ENCODE measurements at regions of chr2 and their contacts with region 1.

Region 1: DNA sequence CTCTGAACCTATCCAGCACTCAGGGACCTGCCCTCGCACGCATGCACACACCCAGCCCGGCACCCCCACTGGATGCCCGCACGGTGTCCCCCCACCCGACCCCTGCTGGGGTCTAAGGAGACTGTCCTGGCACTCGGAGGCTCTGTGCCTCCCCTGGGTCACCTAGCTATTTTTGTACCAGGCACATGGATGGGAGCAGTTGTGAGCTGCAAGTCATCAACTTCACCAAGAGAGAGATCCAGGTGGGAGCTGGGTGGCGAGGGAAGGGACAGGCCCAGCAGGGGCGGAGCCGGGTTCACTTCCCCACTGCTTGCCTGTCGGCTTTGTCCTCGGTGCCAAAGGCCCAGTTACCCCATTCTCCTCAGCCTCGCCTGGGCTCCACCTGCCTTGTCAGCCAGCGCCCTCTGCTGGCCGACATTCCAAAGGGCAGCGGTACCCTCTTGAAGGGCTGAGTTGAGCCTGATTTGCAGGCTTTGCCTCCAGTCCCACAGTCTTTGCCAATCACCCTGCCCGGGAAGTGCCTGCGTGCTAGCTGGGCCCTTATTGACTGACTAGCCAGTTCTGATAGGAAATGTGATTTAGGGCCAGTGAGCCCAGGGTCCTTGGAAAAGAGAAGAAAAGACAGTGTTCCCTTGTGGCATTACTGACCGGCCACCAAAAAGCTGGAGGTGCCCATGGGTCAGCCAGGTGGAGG is 5.8 kb downstream of the NT5DC4 start:
- DNase-seq: peak; percentile 92
- H3K4me3 Mint-ChIP-seq: no peak overlapping the region
- H3K27ac Mint-ChIP-seq: no peak overlapping the region
- H3K4me1 Mint-ChIP-seq: peaks cover 19% of the 10 kb centered on the region
- H3K27me3 Mint-ChIP-seq: peaks cover 51% of the 10 kb centered on the region

Region 2: DNA sequence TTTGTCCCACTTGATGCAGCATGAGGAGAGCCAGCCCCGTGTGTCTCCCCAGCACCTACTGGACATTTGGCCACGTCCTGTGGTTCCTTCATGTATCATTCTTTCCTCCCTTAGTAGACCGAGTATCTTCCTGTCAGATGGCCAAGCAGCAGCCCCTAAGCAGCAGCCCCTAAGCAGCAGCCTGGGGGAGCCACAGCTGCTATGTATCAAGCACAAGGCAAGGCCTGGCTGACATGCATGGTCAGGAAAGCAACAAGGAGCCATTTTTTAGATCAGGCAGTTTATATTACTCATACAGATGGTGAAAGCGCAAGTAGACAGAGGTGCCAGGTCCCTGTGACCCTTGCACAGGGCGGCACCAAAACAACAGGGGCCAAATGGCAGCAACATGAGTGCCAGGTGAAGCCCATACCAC is 120.1 kb before region 1 on chr2:
- CTCF ChIA-PET with region 1: interaction called, 213 read pairs
- DNase-seq: no peak
- H3K4me3 Mint-ChIP-seq: no peak overlapping the region
- H3K27ac Mint-ChIP-seq: no peak overlapping the region
- H3K4me1 Mint-ChIP-seq: no peaks in the 10 kb centered on the region
- H3K27me3 Mint-ChIP-seq: peaks cover 16% of the 10 kb centered on the region

Region 3: DNA sequence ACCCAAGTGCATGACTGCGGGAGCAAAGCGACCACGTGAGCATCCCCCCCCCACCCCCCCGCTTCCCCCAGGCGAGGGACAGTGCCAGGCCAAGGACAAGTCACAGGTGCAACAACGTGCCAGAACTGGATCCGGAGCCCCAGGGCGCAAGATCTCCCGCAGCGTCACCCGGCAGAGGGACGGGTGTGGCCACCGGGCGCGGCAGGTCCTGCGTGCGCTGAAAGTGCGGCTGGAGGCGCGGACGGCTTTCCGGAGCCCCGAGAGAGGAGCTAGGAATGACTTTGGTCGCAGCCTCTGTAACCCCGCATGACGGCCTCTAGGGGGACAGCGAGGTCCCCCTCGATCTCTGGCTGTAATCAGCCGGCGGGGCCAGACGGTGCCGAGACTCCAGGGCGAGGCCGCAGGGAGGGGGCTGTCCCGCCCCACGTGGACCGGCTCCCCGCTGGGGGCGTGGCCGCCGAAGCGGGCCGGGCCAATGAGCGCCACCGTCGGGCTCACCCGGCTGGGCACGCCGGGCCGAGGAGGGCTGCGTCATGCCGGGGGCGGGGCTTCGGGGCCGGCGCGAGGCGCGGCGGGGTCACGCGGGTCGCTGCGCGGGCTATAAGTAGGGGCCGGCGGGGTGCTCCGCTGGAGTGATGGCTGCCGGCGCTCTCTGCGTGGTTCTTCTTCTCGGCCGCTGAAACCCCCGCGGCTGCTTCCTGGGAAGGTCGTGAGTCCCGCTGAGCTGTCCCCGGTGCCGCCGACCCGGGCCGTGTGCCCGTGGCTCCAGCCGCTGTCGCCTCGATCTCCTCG is 81.1 kb before region 1 on chr2 and contains the start of gene SLC20A1:
- CTCF ChIA-PET with region 1: interaction called, 39 read pairs
- DNase-seq: peak; percentile 98
- H3K4me3 Mint-ChIP-seq: peak within 1 kb of the TSS; percentile 99
- H3K27ac Mint-ChIP-seq: peak within 1 kb of the TSS; percentile 93
- H3K4me1 Mint-ChIP-seq: peaks cover 69% of the 10 kb centered on the region
- H3K27me3 Mint-ChIP-seq: no peaks in the 10 kb centered on the region

Region 4: DNA sequence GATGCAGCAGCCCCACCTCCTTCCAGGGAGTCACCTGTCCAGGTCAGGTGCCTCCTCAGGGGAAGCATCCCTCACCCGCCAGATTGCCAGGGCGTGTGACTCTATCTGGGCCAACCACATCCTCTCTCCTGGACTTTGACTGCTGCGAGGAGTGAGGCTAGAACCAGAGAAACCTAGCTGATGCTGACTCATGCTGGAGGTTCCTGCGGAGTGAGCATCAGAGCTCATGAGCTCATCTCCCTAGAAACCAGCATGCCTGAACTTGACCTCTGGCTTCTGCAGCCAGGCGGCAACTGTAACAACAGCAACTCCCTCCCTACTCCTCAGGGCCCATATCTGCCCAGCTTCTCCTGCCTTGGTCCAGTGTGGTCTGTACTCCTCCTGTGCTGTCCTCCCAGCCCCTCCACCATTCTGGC is 34.1 kb before region 1 on chr2:
- CTCF ChIA-PET with region 1: interaction called, 94 read pairs
- DNase-seq: peak; percentile 77
- H3K4me3 Mint-ChIP-seq: no peak overlapping the region
- H3K27ac Mint-ChIP-seq: peak overlapping the region; percentile 75
- H3K4me1 Mint-ChIP-seq: peaks cover 32% of the 10 kb centered on the region
- H3K27me3 Mint-ChIP-seq: peaks cover 27% of the 10 kb centered on the region

Region 5: GRCh38 chr2:112941753-112942658 is 215.4 kb after region 1 on chr2:
- CTCF ChIA-PET with region 1: interaction called, 45 read pairs
- DNase-seq: peak; percentile 84
- H3K4me3 Mint-ChIP-seq: no peak overlapping the region
- H3K27ac Mint-ChIP-seq: no peak overlapping the region
- H3K4me1 Mint-ChIP-seq: no peaks in the 10 kb centered on the region
- H3K27me3 Mint-ChIP-seq: peaks cover 23% of the 10 kb centered on the region

Region 6: DNA sequence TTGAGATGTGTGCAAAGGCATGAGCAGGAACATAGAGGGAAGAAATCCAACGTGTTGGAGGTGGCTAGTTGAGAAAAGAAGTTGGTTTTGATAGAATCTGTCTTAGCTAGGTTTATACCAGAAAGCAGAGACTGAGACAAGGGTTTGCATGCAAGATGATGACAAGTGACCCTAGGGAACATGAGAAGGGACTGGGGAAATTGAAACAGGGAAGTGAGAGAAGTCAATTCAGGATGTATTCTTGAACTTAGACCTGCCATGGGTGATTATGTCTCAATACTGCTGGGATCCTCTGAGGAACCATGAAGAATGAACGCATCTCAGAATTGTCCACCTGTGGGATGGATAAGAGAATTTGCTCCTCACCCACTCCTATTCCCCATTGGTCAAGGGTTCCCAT is 299.1 kb after region 1 on chr2:
- CTCF ChIA-PET with region 1: no interaction called
- DNase-seq: no peak
- H3K4me3 Mint-ChIP-seq: no peak overlapping the region
- H3K27ac Mint-ChIP-seq: no peak overlapping the region
- H3K4me1 Mint-ChIP-seq: no peaks in the 10 kb centered on the region
- H3K27me3 Mint-ChIP-seq: peaks cover 38% of the 10 kb centered on the region

Measured in activated naive CD4-positive, alpha-beta T cell treated with anti-CD3 and anti-CD28 coated beads, Interleukin-2, amount 10 ng/mL, durations not matched to agents 7 days and 5 days (primary cell).